Adrenal gland (tissue), 19 donors: ENCODE measurements at regions of chr2 and their contacts with region 1.

Region 1: DNA sequence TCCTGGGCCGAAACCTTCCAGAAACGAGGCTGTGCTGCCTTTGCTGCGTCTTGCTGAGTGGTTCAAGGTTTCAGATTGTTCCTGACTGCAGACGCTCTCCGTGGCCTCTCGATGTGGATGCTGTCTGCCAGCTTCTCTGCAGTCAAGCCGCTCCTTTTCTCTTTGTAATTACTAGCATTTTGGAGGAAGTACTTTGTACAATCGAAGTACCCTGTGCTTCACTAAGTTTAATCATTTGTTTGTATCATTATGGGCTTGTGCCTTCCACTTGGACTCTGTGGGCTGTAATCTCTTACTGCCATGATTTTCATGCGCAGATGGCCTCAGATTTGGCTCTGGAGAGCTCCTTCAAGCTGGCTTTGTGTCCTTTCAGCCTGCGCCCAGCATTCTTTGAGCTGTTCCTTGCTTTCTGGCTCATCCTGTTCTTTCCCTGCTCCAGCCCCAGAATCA is 49.3 kb downstream of the TRAF3IP1 start:
- DNase-seq: peak in 3 of 7 donors; percentile 13 to 29 (median 28)
- H3K4me3 ChIP-seq: no peak overlapping the region
- H3K27ac ChIP-seq: no peak overlapping the region
- H3K4me1 ChIP-seq: no peaks in the 10 kb centered on the region
- H3K27me3 ChIP-seq: no peaks in the 10 kb centered on the region
- CTCF ChIP-seq: no peak
- POLR2A ChIP-seq: no peak

Region 2: DNA sequence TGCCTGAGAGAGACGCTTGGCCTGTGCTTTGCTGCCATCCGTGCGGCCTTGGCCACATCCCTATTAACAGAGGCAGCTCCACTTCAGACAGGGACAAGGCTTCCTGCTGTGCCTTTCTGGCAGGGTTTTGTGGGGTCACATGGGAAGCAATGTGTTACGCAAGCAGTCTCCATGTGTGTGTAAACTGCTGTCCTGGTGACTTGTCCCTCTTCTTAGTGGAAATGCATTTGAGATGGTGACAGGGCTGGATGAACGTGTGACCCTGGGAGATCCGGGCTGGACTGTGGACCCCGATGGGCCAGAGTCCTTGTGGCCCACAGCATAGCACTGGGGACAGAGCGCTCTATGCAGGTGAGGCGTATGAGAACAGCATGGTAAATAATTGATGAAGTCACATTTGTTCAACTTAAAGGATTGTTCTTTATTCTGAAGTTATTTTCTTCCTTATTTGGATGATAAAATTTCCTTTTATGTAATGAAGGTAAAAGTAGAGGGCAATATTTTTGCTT is 80.3 kb after region 1 on chr2:
- intact Hi-C with region 1: loop called in 1 of 2 experiments (anchors 10 kb)
- DNase-seq: peak; percentile 80 to 96 (median 93)
- H3K4me3 ChIP-seq: no peak overlapping the region
- H3K27ac ChIP-seq: peak overlapping the region in 3 of 5 donors; percentile 13 to 73 (median 51)
- H3K4me1 ChIP-seq: peaks cover 0 to 7% of the 10 kb centered on the region in 2 donors
- H3K27me3 ChIP-seq: no peaks in the 10 kb centered on the region
- CTCF ChIP-seq: no peak
- POLR2A ChIP-seq: peak in 1 of 2 donors; percentile 48

Region 3: GRCh38 chr2:238720232-238720672 is 350.6 kb after region 1 on chr2:
- intact Hi-C with region 1: no loop called
- DNase-seq: peak in 4 of 7 donors; percentile 25 to 65 (median 55)
- H3K4me3 ChIP-seq: no peak overlapping the region
- H3K27ac ChIP-seq: no peak overlapping the region
- H3K4me1 ChIP-seq: no peaks in the 10 kb centered on the region
- H3K27me3 ChIP-seq: peaks cover 8% of the 10 kb centered on the region
- CTCF ChIP-seq: peak in 5 of 6 experiments; percentile 27 to 61 (median 53)
- POLR2A ChIP-seq: no peak